Activated CD8-positive, alpha-beta T cell treated with anti-CD3 and anti-CD28 coated beads, Interleukin-2, amount 10 ng/mL, durations not matched to agents 7 days and 5 days (primary cell): ENCODE measurements at regions of chr1 and their contacts with region 1.

Region 1: GRCh38 chr1:119743781-119744597 is 24.7 kb downstream of the HMGCS2 start:
- DNase-seq: peak; percentile 72
- ATAC-seq: peak; percentile 81
- H3K4me3 Mint-ChIP-seq: no peak overlapping the region
- H3K27ac Mint-ChIP-seq: peak overlapping the region; percentile 22
- H3K4me1 Mint-ChIP-seq: peaks cover 17% of the 10 kb centered on the region
- H3K27me3 Mint-ChIP-seq: no peaks in the 10 kb centered on the region

Region 2: GRCh38 chr1:119732465-119733168 is 11.4 kb before region 1 on chr1:
- CTCF ChIA-PET with region 1: interaction called, 24 read pairs
- POLR2A ChIA-PET with region 1: interaction called, 3 read pairs
- DNase-seq: no peak
- ATAC-seq: no peak
- H3K4me3 Mint-ChIP-seq: no peak overlapping the region
- H3K27ac Mint-ChIP-seq: no peak overlapping the region
- H3K4me1 Mint-ChIP-seq: no peaks in the 10 kb centered on the region
- H3K27me3 Mint-ChIP-seq: no peaks in the 10 kb centered on the region

Region 3: GRCh38 chr1:119758584-119758983 is 14.6 kb after region 1 on chr1:
- CTCF ChIA-PET with region 1: interaction called, 11 read pairs
- POLR2A ChIA-PET with region 1: interaction called, 3 read pairs
- DNase-seq: no peak
- ATAC-seq: peak; percentile 53
- H3K4me3 Mint-ChIP-seq: no peak overlapping the region
- H3K27ac Mint-ChIP-seq: no peak overlapping the region
- H3K4me1 Mint-ChIP-seq: peaks cover 18% of the 10 kb centered on the region
- H3K27me3 Mint-ChIP-seq: peaks cover 32% of the 10 kb centered on the region

Region 4: GRCh38 chr1:119784191-119784782 is 40.3 kb after region 1 on chr1:
- CTCF ChIA-PET with region 1: interaction called, 19 read pairs
- POLR2A ChIA-PET with region 1: no interaction called
- DNase-seq: no peak
- ATAC-seq: no peak
- H3K4me3 Mint-ChIP-seq: no peak overlapping the region
- H3K27ac Mint-ChIP-seq: no peak overlapping the region
- H3K4me1 Mint-ChIP-seq: peaks cover 29% of the 10 kb centered on the region
- H3K27me3 Mint-ChIP-seq: peaks cover 41% of the 10 kb centered on the region